ENCODE measurements at regions of chr11 and their contacts with region 1.

Region 1: GRCh38 chr11:62337303-62338181 is at the start of gene ASRGL1:
- DNase-seq: no peak
- H3K4me3 ChIP-seq: peak within 1 kb of the TSS; percentile 57
- H3K27ac ChIP-seq: no peak within 1 kb of the TSS
- H3K27me3 ChIP-seq: peaks cover 35% of the 10 kb centered on the region
- CTCF ChIP-seq: no peak
- polyA plus RNA-seq, gene ASRGL1: 0.48 and 0.61 TPM in 2 replicates

Region 2: DNA sequence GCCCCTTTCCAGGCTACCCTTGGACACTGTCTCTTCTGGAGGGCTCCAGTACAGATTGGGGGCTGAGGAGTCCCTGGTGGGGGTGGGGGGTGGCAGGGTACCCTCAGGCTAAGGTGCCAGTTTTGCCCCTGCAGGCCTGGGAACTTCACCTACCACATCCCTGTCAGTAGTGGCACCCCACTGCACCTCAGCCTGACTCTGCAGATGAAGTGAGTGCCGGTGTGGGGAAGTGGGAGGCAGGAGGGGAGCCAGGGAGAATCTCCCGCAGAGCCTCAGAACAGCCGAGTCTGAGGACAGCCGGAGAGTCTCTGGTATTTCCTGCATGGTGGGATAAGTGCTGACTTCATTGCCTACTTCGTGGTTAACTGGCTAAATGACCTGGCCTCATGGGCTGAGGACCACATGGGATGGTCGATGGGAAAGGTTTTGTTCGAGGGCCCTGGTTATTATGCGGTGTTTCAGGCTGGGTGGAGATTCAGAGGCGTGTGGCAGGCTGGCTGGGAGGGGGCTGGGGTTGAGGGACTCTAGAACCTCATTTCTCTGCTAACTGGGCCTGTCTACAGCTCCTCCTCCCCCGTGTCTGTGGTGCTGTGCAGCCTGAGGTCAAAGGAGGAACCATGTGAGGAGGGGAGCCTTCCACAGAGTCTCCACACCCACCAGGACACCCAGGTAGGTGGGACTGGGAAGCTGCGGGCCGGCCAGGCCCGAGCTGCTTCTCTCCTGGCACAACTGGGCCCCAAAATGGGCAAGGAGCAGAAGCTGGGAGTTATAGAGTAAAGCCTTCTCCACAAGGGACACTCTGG is 553.6 kb before region 1 on chr11:
- CTCF ChIA-PET with region 1: no interaction called
- POLR2A ChIA-PET with region 1: no interaction called
- DNase-seq: no peak
- H3K4me3 ChIP-seq: no peak overlapping the region
- H3K27ac ChIP-seq: peak overlapping the region; percentile 11
- H3K27me3 ChIP-seq: no peaks in the 10 kb centered on the region
- CTCF ChIP-seq: no peak

Region 3: DNA sequence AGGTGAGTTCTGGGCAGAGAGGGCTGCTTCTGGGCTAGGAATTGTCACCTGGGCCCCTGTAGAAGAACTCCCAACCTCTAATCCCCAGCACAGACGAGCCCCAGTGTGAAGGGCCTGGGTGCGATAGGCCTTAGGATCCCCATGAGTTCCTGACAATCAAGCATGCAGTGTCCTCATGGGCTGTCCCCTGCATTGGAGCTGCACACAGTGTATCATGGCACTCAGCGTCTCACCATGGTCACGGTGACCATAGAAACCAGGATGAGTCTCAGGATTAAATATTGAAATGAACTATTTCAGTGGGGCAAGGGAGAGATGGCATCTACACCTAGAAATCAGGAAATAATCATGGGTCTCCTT is 128.8 kb before region 1 on chr11:
- CTCF ChIA-PET with region 1: no interaction called
- POLR2A ChIA-PET with region 1: no interaction called
- DNase-seq: no peak
- H3K4me3 ChIP-seq: no peak overlapping the region
- H3K27ac ChIP-seq: no peak overlapping the region
- H3K27me3 ChIP-seq: peaks cover 4% of the 10 kb centered on the region
- CTCF ChIP-seq: no peak

Region 4: DNA sequence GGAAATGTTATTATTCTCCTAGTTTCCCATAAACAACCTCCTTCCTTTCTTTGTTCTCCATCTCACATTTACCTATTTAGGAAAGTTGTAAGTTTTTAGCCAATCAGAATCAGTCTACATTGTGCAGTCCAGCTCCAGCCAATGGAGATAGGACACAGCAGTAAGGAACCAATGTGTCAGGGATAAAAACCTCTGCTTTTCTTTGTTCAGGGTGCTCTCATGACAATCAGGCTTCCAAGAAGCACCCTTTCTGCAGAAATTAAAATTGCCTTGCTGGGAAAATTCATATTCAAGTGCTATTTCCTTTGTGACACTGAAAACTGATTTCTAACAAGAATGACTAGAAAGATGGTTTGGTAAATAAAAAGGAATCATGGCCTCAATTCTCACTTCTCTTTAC is 114.4 kb before region 1 on chr11:
- CTCF ChIA-PET with region 1: interaction called, 10 read pairs
- POLR2A ChIA-PET with region 1: no interaction called
- DNase-seq: no peak
- H3K4me3 ChIP-seq: no peak overlapping the region
- H3K27ac ChIP-seq: no peak overlapping the region
- H3K27me3 ChIP-seq: no peaks in the 10 kb centered on the region
- CTCF ChIP-seq: no peak

Region 5: DNA sequence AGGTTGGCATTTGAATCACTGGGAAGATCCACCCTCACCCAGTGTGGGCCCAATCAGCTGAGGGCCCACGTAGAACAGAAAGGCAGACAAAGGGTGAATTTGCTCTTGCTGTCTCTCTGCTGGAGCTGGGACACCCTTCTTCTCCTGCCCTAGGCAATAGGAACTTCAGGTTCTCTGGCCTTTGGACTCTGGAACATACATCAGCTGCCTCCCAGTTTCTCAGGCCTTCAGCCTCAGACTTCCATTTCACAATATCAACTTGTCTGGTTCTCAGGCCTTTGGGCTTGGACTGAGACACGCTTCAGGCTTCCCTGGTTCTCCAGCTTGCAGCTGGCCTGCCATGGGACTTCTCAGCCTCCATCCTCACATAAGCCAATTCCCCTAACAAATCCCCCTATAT is 15.0 kb before region 1 on chr11:
- CTCF ChIA-PET with region 1: no interaction called
- POLR2A ChIA-PET with region 1: no interaction called
- DNase-seq: no peak
- H3K4me3 ChIP-seq: no peak overlapping the region
- H3K27ac ChIP-seq: no peak overlapping the region
- H3K27me3 ChIP-seq: peaks cover 17% of the 10 kb centered on the region
- CTCF ChIP-seq: no peak

Region 6: DNA sequence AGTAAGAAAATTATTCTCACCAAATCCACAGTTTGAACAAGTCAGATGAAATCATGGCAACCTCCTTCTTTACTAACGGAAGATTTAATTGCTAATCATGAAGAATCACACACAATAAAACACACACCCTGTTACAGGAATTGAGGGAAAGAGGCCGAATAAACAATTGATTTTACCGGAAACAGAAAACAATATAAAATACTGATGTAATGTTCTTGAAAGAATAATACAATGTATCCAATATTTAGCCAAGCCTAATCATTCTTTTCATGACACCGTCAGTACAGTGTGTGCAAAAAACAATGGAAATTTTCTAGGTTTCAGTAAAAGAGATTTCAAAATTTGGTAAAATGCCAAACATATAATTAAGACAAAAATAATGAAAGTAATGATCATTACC is 23.1 kb after region 1 on chr11:
- CTCF ChIA-PET with region 1: interaction called, 13 read pairs
- POLR2A ChIA-PET with region 1: no interaction called
- DNase-seq: no peak
- H3K4me3 ChIP-seq: no peak overlapping the region
- H3K27ac ChIP-seq: no peak overlapping the region
- H3K27me3 ChIP-seq: no peaks in the 10 kb centered on the region
- CTCF ChIP-seq: no peak

Region 7: DNA sequence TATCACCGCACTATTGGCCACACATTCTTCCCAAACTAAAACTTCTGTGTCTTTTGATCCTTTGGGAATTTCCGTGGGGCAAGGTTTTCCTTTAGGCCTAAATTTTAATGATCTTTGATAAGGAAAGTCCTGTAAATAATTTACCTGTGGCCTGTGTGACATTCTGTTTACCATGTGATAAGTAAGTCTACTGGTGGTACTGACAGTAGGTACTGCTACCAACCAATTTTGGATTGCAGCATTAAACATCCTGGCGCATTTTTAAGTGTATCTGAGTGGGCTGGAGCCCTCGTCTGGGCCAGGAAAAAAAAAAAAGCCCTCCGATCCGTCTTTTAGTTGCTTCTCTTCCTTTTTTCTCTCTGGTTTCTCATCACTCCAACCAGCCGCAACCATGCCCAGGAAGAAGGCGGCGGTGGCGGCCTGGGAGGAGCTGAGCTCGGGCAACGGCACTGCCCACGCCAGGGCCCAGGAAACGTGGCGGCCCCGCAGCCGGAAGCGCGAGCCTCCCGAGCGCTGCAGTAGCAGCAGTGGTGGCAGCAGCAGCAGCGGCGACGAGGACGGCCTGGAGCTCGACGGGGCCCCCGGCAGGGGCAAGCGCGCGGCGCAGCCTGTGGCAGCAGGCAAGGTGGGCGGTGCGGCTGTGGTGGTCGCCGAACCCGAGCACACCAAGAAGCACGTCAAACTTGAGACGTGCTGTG is 33.4 kb after region 1 on chr11:
- CTCF ChIA-PET with region 1: interaction called, 53 read pairs
- POLR2A ChIA-PET with region 1: no interaction called
- DNase-seq: no peak
- H3K4me3 ChIP-seq: no peak overlapping the region
- H3K27ac ChIP-seq: no peak overlapping the region
- H3K27me3 ChIP-seq: peaks cover 3% of the 10 kb centered on the region
- CTCF ChIP-seq: no peak

Region 8: GRCh38 chr11:63099555-63099954 is 762.0 kb after region 1 on chr11:
- CTCF ChIA-PET with region 1: no interaction called
- POLR2A ChIA-PET with region 1: no interaction called
- DNase-seq: no peak
- H3K4me3 ChIP-seq: no peak overlapping the region
- H3K27ac ChIP-seq: no peak overlapping the region
- H3K27me3 ChIP-seq: no peaks in the 10 kb centered on the region
- CTCF ChIP-seq: no peak